Breast epithelium (tissue), 4 donors: ENCODE measurements at regions of chr9 and their contacts with region 1.

Region 1: DNA sequence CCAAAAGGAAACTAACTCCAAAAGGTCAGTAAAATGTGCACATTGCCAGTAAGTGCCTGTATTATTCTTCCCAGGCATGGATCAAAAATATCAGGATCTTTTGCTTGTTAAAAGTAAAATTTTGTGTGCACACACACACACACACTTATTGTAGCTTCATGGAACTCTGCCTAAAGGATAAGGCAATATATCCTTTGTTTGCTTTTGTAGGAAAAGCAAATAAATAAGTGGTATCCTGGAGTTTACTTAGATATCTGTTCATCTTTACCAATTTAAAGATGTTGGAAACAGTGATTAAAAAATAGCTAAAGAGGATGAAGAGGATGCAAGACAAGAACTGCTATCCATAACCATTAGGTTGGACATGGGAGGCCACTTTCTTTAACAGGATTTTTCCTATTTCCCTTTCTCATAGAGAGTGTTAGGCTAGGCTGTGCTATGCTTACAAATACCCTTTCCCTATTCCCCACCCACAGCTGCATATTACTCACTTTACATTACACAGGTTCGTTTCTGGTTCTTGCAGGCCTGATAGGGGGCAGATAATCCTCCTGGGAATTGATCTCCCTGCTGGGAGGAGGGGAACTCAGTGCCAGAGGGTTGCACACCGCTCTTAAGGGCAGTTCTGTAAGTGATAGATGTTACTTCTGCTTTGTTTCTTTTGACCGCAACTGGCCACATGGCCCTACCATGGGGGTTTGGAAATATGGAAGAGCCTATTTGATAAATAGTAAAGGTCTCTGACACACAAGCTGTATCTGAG is 54.2 kb upstream of the NTRK2 start:
- DNase-seq: no peak
- H3K4me3 ChIP-seq: no peak overlapping the region
- H3K27ac ChIP-seq: no peak overlapping the region
- H3K4me1 ChIP-seq: no peaks in the 10 kb centered on the region
- H3K27me3 ChIP-seq: no peaks in the 10 kb centered on the region
- CTCF ChIP-seq: no peak
- POLR2A ChIP-seq: no peak

Region 2: GRCh38 chr9:84903963-84904362 is 288.6 kb after region 1 on chr9:
- intact Hi-C with region 1: loop called (anchors 5 kb)
- DNase-seq: no peak
- H3K4me3 ChIP-seq: no peak overlapping the region
- H3K27ac ChIP-seq: no peak overlapping the region
- H3K4me1 ChIP-seq: no peaks in the 10 kb centered on the region
- H3K27me3 ChIP-seq: no peaks in the 10 kb centered on the region
- CTCF ChIP-seq: no peak
- POLR2A ChIP-seq: no peak